B cell (primary cell): ENCODE measurements at regions of chr11 and their contacts with region 1.

Region 1: GRCh38 chr11:44286268-44286880 is 23.6 kb downstream of the ALX4 start:
- DNase-seq: peak; percentile 77
- ATAC-seq: peak; percentile 74
- H3K4me3 ChIP-seq: no peak overlapping the region
- H3K4me3 Mint-ChIP-seq: no peak overlapping the region
- H3K27ac ChIP-seq: no peak overlapping the region
- H3K27ac Mint-ChIP-seq: no peak overlapping the region
- H3K4me1 ChIP-seq: no peaks in the 10 kb centered on the region
- H3K4me1 Mint-ChIP-seq: no peaks in the 10 kb centered on the region
- H3K27me3 ChIP-seq: no peaks in the 10 kb centered on the region
- H3K27me3 Mint-ChIP-seq: peaks cover 27% of the 10 kb centered on the region
- CTCF ChIP-seq: peak; percentile 96

Region 2: GRCh38 chr11:44538375-44539054 is 252.1 kb after region 1 on chr11:
- CTCF ChIA-PET with region 1: interaction called, 34 read pairs
- POLR2A ChIA-PET with region 1: no interaction called
- intact Hi-C with region 1: no loop called
- DNase-seq: peak; percentile 81
- ATAC-seq: peak; percentile 93
- H3K4me3 ChIP-seq: no peak overlapping the region
- H3K4me3 Mint-ChIP-seq: no peak overlapping the region
- H3K27ac ChIP-seq: no peak overlapping the region
- H3K27ac Mint-ChIP-seq: no peak overlapping the region
- H3K4me1 ChIP-seq: peaks cover 0 to 6% of the 10 kb centered on the region in 2 donors
- H3K4me1 Mint-ChIP-seq: peaks cover 5% of the 10 kb centered on the region
- H3K27me3 ChIP-seq: peaks cover 0 to 16% (median 2%) of the 10 kb centered on the region in 4 experiments
- H3K27me3 Mint-ChIP-seq: peaks cover 17% of the 10 kb centered on the region
- CTCF ChIP-seq: peak; percentile 100

Region 3: GRCh38 chr11:44621140-44621681 is 334.8 kb after region 1 on chr11:
- CTCF ChIA-PET with region 1: interaction called, 9 read pairs
- POLR2A ChIA-PET with region 1: no interaction called
- intact Hi-C with region 1: loop called (anchors 5 kb)
- DNase-seq: peak; percentile 70
- ATAC-seq: peak; percentile 53
- H3K4me3 ChIP-seq: no peak overlapping the region
- H3K4me3 Mint-ChIP-seq: no peak overlapping the region
- H3K27ac ChIP-seq: no peak overlapping the region
- H3K27ac Mint-ChIP-seq: peak overlapping the region; percentile 50
- H3K4me1 ChIP-seq: peaks cover 20 to 30% of the 10 kb centered on the region in 2 donors
- H3K4me1 Mint-ChIP-seq: peaks cover 73% of the 10 kb centered on the region
- H3K27me3 ChIP-seq: no peaks in the 10 kb centered on the region
- H3K27me3 Mint-ChIP-seq: no peaks in the 10 kb centered on the region
- CTCF ChIP-seq: peak; percentile 81

Region 4: DNA sequence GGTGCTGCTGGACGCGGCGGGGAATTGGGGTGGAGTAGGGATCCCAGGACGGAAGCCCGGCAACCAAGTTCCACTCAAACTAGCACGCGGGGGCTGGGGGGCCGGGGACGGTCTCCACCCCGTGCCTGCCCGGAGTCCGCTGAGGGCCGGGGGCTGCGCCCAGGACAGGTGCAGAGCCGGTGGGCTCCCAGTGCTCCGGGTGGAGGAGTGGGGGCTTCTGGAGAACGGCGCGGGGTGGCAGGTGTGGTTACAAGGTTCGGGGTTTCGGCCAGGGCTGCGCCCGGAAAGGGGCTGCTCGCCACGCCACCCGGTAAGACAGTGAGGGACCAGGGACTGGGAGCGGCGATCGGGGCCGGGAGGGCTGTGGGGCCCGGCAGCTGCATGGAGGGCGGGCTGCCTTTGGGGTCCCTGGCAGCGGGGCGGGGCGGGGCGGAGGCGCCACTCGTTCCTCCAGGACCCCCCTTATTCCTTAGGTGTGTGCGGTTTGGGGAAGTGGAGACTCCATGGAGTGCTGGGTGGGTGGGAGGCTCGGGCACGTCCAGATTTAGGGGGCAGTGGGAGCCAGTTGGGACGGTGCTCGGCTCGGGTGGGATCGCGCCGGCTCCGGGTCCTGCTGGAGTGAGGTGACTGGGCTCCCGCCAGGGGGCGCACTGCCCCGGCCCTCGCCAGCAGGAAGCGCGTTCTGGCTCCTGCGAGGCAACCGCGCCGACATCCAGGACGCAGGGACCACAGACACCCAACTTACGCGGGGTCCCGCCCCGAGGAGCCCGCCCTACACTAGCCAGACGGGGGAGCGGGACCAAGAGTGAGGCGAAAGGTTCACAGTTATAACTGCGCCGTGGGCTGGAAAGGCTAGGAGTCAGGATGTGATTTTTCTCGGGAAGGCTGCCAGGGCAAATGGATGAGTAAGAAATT is 441.3 kb after region 1 on chr11:
- CTCF ChIA-PET with region 1: no interaction called
- POLR2A ChIA-PET with region 1: no interaction called
- intact Hi-C with region 1: loop called (anchors 10 kb)
- DNase-seq: peak; percentile 78
- ATAC-seq: peak; percentile 74
- H3K4me3 ChIP-seq: peak overlapping the region in 4 of 5 experiments; percentile 65 to 84 (median 66)
- H3K4me3 Mint-ChIP-seq: peak overlapping the region; percentile 88
- H3K27ac ChIP-seq: peak overlapping the region in 1 of 2 donors; percentile 15
- H3K27ac Mint-ChIP-seq: peak overlapping the region; percentile 80
- H3K4me1 ChIP-seq: peaks cover 14 to 18% of the 10 kb centered on the region in 2 donors
- H3K4me1 Mint-ChIP-seq: peaks cover 19% of the 10 kb centered on the region
- H3K27me3 ChIP-seq: peaks cover 0 to 19% (median 10%) of the 10 kb centered on the region in 4 experiments
- H3K27me3 Mint-ChIP-seq: peaks cover 21% of the 10 kb centered on the region
- CTCF ChIP-seq: peak; percentile 98

Region 5: DNA sequence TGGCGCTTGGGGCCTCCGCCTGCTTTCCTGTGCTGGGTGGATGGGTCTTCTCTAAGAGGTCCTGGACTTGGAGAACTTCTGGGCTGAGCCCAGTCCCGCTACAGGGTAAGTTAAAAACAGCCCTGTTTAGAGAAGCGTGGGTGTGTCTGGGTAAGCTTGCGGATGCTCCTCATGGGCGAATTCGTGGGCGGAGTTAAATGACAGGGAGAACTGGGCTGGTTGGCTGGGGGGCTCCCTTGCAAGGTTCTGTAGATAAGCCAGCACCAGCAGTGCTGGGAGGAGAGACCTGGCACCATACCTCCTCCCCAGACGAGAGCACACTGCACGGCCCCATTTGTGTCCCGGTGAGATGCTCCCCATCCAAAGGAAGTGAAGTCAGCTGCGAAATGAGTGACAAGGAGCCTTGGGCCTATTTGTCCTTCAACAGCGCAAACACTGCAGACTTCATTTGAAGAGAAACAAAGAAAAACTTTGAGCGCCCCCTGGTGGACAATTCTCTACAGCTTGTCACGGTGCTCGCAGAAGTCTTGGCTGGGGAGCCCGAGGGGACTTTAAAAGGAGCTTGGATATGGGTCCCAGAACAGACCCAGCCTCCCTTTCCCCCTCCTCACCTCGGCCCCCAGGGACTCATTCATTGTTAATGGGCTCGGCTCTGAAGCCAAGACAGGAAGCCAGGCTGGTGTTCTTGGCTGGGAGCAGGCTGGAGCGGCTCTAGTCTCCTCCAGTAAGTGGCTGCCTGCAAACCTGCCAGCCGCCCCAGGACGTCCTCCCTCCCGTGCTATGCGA is 624.8 kb after region 1 on chr11:
- CTCF ChIA-PET with region 1: interaction called, 28 read pairs
- POLR2A ChIA-PET with region 1: no interaction called
- intact Hi-C with region 1: no loop called
- DNase-seq: peak; percentile 85
- ATAC-seq: peak; percentile 69
- H3K4me3 ChIP-seq: no peak overlapping the region
- H3K4me3 Mint-ChIP-seq: no peak overlapping the region
- H3K27ac ChIP-seq: no peak overlapping the region
- H3K27ac Mint-ChIP-seq: no peak overlapping the region
- H3K4me1 ChIP-seq: peaks cover 23 to 31% of the 10 kb centered on the region in 2 donors
- H3K4me1 Mint-ChIP-seq: peaks cover 24% of the 10 kb centered on the region
- H3K27me3 ChIP-seq: peaks cover 0 to 5% (median 0%) of the 10 kb centered on the region in 4 experiments
- H3K27me3 Mint-ChIP-seq: peaks cover 4% of the 10 kb centered on the region
- CTCF ChIP-seq: peak; percentile 82